GM18951 (cell line): ENCODE measurements at regions of chr10 and their contacts with region 1.

Region 1: DNA sequence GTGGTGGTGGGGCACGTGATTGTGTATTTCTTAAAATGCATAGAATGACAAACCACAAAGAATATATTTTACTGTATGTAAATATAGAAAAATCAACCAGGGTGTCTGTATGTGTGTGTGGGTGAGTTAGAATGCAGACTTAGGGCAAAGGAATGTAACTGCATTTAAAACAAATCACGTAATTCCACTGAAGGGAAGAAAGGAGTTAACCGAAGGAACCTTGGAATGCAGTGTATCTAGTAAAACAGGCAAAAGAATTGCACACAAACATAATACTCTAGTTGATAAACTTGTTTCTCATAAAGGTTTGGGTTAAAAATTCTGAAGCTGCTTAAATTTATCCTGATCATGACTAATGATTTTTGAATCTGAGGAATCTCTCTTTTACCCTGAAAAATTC is 134.9 kb downstream of the ADRA2A start:
- POLR2A ChIP-seq: no peak

Region 2: GRCh38 chr10:111128331-111129180 is 83.2 kb before region 1 on chr10:
- in situ Hi-C with region 1: loop called (anchors 10 kb)
- POLR2A ChIP-seq: no peak